ENCODE measurements at regions of chr21 and their contacts with region 1.

Region 1: DNA sequence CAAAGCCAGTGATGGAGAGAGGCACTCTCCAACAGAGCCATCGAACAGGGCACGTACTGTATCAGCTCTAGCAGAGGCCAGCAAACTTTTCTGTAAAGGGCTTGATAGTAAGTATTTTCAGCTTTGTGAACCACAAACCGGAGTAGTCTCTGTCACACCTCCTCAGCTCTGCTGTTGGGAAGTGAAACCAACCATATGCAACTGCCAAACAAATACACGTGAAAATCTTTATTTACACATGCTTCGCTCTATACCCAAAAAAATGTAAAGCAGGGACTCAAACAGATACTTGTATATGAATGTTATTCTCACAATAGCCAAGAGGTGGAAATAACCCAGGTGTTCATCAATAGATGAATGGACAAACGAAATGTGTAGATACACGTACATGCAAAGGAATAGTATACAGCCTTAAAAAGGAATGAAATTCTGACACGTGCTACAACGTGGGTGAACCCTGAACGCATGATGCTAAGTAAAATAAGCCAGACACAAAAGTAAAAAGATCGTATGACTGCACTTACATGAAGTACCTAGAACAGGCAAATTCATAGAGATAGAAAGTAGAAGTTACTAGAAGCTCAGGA is 39.0 kb downstream of the SETD4 start:
- DNase-seq: no peak

Region 2: GRCh38 chr21:35953615-35954014 is 67.7 kb before region 1 on chr21:
- intact Hi-C with region 1: loop called in 1 of 2 experiments (anchors 2 kb)
- DNase-seq: no peak

Region 3: DNA sequence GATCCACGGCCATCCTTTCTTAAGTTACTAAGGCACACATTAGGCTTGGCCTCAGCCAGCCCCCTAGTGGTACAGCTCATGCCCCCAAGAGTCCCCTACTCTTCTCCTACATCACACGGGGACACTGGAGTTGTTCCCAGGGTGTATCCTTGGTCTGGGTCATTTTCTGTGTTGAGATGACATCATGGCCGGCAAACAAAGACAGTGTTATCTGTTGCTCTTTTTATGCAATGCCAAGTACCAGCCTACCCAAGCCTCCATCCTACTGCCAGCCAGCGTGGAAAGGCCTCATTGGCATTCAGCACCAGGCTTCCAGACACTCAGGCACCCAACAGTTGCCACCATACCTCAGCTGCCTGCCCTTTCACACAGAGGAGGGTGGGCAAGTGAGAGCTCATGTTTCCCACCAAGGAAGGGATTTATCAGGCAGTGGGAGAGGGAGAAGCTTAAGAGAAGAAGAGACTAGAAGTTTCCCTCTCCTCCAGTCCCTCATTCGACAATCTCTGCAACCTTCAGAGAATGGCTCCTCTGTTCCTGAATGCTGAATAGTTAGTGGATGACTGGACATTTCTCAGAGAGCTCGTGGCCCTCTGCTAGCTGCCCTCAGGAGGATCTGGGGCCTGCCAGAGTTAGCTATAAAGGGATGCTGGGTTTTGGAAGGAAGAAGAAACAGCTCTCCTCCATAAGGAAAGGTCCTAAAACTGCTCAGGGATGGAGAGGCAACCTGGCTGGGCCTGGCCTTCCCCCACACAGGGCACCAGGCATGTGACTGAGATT is 66.2 kb after region 1 on chr21:
- intact Hi-C with region 1: no loop called
- DNase-seq: no peak